Pancreas (tissue), 10 donors: ENCODE measurements at regions of chr16 and their contacts with region 1.

Region 1: GRCh38 chr16:70375636-70376611 is 29.2 kb downstream of the DDX19A start:
- DNase-seq: no peak
- ATAC-seq: peak in 1 of 4 donors; percentile 11
- H3K4me3 ChIP-seq: no peak overlapping the region
- H3K27ac ChIP-seq: no peak overlapping the region
- H3K4me1 ChIP-seq: peaks cover 0 to 4% (median 4%) of the 10 kb centered on the region in 3 donors
- H3K27me3 ChIP-seq: no peaks in the 10 kb centered on the region
- CTCF ChIP-seq: no peak

Region 2: DNA sequence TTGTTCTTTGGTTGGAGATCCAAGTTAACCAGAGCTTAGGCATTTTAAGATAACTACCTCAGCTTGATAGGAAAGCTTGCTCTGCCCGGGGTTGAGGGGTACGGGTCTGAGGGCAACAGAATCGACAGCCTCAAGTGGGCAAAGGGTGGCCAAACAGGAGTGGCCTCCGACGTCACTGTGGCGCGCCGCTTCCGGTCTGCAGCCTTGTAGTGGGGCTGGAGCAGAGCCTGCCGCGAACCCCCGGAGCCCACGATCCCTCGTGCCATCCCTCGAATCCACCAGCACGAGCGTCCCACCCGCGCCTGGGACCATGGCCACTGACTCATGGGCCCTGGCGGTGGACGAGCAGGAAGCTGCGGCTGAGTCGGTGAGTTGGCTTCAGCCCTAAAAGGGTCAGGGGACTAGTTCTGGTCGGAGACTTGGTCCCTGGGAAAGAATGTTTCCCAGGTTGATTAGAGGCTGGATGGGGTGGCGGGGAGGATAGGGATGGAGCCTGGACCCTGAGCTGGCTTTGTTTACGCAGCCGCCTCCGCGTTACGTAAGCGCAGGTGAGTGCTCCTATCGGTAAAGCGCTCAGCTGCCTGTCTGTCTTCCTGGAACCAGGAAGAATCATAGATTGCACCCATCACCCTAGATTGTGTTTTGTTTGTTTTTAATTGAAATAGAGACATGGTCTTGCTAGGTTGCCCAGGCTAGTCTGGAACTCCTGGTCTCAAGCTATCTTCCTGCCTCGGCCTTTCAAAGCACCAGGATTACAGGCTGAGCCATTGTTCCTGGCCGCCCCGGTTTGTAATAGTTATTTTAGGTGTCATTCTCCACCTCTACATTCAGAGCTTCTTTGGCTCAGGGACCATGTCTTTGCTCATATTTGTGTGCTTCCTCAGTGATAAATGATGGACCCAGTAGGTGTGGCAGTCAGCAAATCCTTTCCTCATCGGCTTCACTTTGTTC is 76.7 kb before region 1 on chr16 and contains the start of gene DDX19B:
- intact Hi-C with region 1: no loop called
- DNase-seq: peak; percentile 73 to 88 (median 77)
- ATAC-seq: peak; percentile 90 to 94 (median 94)
- H3K4me3 ChIP-seq: peak within 1 kb of the TSS; percentile 26 to 81 (median 72)
- H3K27ac ChIP-seq: peak within 1 kb of the TSS; percentile 94 to 99 (median 95)
- H3K4me1 ChIP-seq: peaks cover 0 to 11% (median 4%) of the 10 kb centered on the region in 3 donors
- H3K27me3 ChIP-seq: no peaks in the 10 kb centered on the region
- CTCF ChIP-seq: no peak
- total RNA-seq, gene DDX19B: 12.5 to 17.0 (median 13.7) TPM

Region 3: DNA sequence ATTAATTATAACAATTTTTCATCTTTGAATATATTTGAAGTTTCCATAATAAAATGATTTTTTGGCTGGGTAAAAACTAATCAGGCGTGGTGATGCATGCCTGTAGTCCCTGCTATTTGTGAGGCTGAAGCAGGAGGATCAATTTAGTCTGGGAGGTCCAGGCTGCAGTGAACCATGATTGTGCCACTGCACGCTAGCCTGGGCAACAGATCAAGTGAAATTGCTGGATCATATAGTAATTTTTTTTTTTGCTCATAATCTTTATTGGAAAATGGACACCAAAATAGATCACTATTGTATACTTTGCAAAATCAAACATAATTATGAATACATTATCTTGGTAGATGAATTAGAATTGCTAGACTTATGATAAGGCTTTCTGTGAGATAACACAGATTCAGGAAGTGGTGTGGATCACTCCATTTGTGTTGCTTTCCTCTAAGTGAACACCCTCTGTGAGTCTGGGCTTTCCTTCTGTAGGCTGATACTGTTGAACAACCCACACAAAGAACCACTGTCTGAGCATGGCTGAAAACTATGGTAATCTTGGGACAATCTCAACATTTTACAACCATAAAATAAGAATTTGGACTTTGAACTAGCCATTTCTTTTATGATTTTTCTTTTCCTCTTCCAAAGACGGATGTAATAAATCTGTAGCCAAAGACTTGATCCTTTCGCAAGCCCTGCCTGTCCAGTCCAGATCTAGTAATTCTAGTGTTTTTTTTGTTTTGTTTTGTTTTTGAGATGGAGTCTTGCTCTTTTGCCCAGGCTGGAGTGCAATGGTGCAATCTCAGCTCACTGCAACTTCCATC is 68.5 kb after region 1 on chr16:
- intact Hi-C with region 1: no loop called
- DNase-seq: no peak
- ATAC-seq: peak; percentile 42 to 70 (median 62)
- H3K4me3 ChIP-seq: no peak overlapping the region
- H3K27ac ChIP-seq: peak overlapping the region in 2 of 4 donors; percentile 53 to 57
- H3K4me1 ChIP-seq: peaks cover 0 to 4% (median 0%) of the 10 kb centered on the region in 3 donors
- H3K27me3 ChIP-seq: no peaks in the 10 kb centered on the region
- CTCF ChIP-seq: no peak

Region 4: DNA sequence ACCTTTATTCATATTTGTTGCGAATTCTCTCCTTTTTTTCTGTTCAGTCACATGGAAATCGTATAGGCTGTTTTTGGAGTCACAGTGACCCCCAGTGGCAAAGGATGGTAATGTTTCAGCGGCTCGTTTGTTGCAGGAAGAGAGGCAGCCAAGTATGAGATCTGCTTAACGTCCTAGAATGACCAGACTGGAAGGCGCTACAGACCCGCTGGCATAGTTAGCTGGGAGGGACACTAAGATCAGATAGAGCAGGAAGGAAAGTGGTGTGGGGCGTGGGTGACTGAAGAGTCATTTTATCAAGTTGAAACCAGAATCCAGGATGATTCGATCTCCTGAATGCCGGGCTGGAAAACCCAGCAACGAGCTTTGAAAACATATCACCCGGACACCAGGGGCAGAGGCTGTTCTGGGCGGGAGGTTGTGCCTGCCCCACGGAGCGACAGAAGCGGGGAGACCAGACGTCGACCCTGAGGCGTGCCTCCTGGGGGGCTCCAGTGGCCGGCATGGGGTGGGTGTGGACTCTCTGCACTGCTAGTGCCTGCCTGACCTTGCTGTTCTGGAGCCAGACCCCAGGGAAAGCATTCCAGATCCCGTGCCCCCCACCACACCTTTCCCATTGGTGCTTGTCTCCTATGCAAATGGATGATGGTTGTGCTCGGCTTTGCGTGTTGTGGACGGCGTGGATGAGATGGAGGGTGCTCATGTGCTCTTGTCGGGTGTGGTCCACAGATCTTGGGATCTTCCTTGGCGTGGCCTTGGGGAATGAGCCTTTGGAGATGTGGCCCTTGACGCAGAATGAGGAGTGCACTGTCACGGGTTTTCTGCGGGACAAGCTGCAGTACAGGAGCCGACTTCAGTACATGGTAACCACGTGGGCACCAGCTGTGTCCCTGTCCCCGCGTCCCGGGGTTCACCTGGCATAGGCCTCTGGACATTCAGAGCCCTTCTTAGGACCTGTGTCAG is 278.2 kb after region 1 on chr16:
- intact Hi-C with region 1: loop called in 1 of 3 experiments (anchors 10 kb)
- DNase-seq: peak; percentile 57 to 90 (median 72)
- ATAC-seq: peak; percentile 86 to 98 (median 94)
- H3K4me3 ChIP-seq: peak overlapping the region in 1 of 4 donors; percentile 31
- H3K27ac ChIP-seq: no peak overlapping the region
- H3K4me1 ChIP-seq: no peaks in the 10 kb centered on the region
- H3K27me3 ChIP-seq: no peaks in the 10 kb centered on the region
- CTCF ChIP-seq: peak; percentile 80 to 89 (median 86)